ENCODE measurements at regions of chr5 and their contacts with region 1.

Region 1: DNA sequence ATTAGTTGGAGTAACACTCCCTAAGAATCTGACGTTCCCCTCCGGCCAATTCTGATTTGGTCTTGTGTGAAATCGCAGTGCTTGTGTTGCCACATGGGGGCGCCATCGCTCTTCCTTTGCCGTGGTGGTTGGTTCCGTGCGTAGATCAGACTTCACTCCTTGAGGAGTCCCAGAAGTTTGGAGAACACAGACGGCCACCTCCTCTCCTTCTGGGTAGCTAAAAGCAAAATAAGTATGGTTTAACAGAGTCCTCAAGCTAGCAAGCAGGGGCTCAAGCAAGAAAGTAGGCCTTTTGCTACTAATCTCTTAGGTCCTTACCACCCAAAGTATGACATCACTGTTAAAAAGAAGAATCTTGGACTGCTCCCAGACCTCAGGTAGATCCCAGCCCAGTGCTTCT is 59.5 kb downstream of the HSPA4 start:
- DNase-seq: peak; percentile 69
- H3K4me3 Mint-ChIP-seq: no peak overlapping the region
- H3K27ac Mint-ChIP-seq: no peak overlapping the region
- H3K4me1 Mint-ChIP-seq: peaks cover 46% of the 10 kb centered on the region
- H3K27me3 Mint-ChIP-seq: peaks cover 2% of the 10 kb centered on the region

Region 2: GRCh38 chr5:133051580-133052332 is 59.5 kb before region 1 on chr5 and contains the start of gene HSPA4:
- intact Hi-C with region 1: no loop called
- DNase-seq: peak; percentile 96
- H3K4me3 Mint-ChIP-seq: peak within 1 kb of the TSS; percentile 96
- H3K27ac Mint-ChIP-seq: peak within 1 kb of the TSS; percentile 100
- H3K4me1 Mint-ChIP-seq: peaks cover 46% of the 10 kb centered on the region
- H3K27me3 Mint-ChIP-seq: peaks cover 2% of the 10 kb centered on the region
- total RNA-seq, gene HSPA4: 244 and 247 TPM in 2 replicates

Region 3: DNA sequence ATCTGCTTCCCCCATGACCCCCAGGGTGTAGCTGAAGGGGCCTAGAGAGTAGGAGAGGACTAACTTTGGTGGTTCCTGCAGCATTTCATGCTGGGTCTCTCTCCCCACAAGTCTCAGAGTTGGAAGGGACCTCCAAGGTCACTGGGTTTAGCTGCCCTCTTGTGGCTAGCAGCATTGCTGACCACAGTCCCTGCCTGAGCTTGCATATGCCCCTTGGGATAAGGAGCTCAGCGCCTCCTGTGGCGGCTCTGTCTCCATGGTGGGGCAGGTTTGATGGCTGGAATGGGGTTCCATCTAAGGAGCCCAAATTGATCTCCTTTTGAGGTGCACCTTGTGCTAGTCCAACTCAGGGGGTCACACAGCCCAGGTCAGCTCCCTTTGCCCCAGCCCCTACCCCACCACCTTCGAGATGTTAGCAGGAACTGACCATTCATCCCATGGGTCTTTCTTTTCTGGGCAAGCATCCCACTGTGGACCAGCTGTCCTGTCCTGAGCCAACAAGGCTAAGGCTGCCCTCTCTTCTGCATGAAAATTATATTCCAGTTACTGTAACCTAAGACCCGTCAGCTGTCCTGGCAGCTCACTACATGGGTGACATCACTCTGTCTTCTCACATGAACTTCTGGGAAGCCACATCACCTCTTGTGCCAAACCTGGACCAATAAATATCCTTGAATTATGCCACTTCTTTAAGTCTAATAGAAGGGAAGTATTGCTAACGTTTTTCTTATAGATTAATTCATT is 136.8 kb after region 1 on chr5:
- intact Hi-C with region 1: loop called (anchors 5 kb)
- DNase-seq: no peak
- H3K4me3 Mint-ChIP-seq: no peak overlapping the region
- H3K27ac Mint-ChIP-seq: no peak overlapping the region
- H3K4me1 Mint-ChIP-seq: peaks cover 16% of the 10 kb centered on the region
- H3K27me3 Mint-ChIP-seq: peaks cover 5% of the 10 kb centered on the region

Region 4: DNA sequence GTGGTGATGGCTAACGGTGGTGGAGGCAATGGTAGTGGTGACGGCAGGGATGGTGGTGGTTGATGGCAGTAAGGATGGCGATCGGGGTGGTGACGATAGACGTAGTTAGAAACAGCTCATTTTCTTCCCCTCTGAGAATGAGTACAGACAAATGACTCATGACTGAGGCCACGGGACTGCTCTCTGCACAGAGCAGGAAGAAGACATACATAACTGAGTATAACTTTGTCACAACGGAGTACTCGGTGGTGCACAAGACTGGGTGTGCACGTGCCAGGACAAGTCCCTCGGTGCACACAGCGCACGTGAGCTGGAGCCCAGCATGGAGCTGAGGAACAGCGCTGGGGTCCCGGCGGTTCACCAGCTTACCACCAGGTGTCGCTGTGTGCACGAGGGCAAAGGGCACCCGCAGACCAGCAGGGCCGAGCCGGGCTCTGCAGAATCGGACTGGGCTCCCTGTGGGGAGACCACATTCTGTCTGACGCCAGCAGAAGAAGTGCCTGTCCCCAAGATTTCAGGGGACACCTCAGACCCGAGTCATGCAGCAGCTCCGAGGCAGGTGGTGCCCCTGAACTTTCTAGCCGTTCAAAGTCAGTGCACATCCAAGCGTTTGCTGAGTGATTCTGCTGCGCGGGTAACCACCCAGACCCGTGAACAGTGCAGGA is 312.5 kb after region 1 on chr5:
- intact Hi-C with region 1: loop called (anchors 1 kb)
- DNase-seq: peak; percentile 52
- H3K4me3 Mint-ChIP-seq: no peak overlapping the region
- H3K27ac Mint-ChIP-seq: no peak overlapping the region
- H3K4me1 Mint-ChIP-seq: peaks cover 10% of the 10 kb centered on the region
- H3K27me3 Mint-ChIP-seq: peaks cover 14% of the 10 kb centered on the region

Region 5: DNA sequence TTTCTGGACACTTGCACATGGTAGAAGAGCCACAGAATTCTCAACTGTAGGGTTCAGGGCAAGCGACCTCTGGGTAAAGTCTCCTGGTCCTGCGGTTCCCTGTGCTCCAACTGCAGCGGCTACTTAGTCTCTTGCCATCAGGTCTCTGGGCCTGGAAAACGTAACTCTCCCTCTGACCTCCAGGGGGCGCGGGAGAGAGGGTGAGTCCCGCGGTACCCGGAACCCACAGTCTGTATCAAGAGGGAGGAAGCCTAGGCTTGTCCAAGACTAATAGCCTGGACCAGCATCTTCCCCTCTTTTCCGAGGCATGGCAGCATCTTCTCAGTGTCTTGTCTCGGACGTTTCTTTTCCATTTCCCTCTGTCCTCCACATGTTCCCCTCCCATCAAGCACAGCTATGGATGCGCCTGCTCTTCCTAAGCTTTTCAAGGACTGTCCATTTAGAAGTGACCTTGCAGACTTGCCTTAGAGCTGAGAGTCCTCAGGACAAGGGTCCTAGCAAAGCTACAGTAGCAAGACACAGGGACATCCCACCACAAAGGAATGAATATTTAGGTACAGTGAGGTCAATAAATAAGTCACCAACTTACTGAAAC is 441.7 kb after region 1 on chr5:
- intact Hi-C with region 1: loop called (anchors 1 kb)
- DNase-seq: peak; percentile 43
- H3K4me3 Mint-ChIP-seq: no peak overlapping the region
- H3K27ac Mint-ChIP-seq: no peak overlapping the region
- H3K4me1 Mint-ChIP-seq: peaks cover 5% of the 10 kb centered on the region
- H3K27me3 Mint-ChIP-seq: peaks cover 42% of the 10 kb centered on the region

Region 6: DNA sequence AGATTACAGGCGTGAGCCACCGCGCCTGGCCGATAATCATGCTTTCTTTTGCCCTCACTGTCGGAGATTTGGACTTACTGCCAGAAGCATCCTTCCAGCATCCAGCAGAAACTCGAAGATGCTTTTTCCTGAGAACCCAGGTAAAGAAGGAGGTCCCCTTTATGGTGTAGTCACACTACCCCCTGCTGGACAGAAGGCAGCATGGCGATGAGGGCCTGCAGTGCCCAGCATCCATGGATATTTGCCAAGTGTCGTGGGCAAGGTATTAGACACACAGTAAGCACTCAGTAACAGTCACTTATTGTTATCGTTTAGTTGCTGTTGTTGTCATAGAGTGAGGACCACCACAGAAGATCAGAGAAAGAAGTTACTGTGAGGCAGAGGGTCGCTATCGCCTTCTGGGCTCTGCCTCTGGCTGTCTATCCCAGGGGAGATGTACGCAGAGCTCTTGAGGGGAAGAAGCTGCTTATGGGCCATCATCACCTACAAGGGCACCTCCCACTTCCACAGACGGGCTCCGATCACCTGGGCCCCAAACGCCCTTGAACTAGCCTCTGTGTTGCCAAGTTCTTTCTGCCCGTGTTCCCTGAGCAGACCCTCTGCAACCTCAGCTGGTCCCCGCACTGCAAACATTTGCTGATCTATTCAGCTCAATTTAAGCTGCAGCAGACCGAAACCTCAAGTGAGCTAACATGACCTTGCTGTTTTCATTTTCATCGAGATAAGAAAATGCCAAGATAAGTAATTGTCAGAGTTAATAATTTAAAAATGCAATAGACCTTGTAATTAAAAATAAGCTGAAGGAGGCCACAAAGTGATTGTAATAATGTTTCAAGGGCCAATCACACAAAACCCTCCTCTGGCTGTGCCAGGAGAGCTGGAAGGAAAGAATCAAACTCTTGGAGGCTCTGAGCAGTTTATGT is 833.2 kb after region 1 on chr5:
- intact Hi-C with region 1: loop called (anchors 1 kb)
- DNase-seq: no peak
- H3K4me3 Mint-ChIP-seq: no peak overlapping the region
- H3K27ac Mint-ChIP-seq: no peak overlapping the region
- H3K4me1 Mint-ChIP-seq: peaks cover 10% of the 10 kb centered on the region
- H3K27me3 Mint-ChIP-seq: peaks cover 1% of the 10 kb centered on the region